SK-N-SH (cell line): ENCODE measurements at regions of chr17 and their contacts with region 1.

Region 1: DNA sequence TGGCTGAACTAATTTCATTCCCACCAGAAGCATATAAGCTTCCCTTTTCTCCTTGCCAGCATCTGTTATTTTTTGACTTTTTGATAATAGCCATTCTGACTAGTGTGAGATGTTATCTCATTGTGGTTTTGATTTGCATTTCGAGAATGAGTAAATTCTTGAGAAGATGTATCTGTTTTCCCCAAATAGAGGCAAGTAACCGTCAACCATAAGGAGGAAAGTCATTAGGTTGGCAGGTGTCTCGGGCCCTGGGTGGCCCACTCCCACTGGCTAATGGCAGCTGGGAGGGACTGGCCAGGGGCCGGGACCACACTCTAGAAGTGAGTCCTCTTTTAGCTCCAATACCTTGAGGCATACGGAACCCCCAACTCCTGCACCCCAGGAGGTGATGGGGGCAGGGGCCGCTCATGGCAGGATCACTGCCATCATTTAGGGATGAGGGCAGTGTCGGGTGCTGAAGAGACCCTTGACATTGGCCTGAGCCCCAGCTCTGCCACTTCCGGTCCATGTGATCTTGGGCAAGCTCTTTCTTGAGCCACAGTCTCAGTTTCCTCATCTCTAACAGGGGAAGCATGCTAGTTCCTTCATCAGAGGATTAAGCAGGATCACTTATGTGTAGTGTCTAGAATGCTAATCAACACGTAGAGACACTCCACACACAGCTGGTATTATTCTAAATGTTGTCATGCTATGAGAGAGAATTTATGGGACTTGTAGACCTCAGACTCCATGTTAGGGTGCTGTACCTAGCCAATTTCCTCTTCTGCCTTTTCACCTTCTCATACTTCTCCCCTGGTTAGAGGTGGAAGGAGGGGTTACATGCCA is 44.3 kb downstream of the RGS9 start:
- DNase-seq: no peak
- H3K4me3 ChIP-seq: no peak overlapping the region
- H3K27ac ChIP-seq: peak overlapping the region; percentile 14 to 79; a peak in 2 of 4 replicates
- H3K4me1 ChIP-seq: peaks cover 34 to 54% of the 10 kb centered on the region in 2 experiments
- H3K27me3 ChIP-seq: no peaks in the 10 kb centered on the region
- CTCF ChIP-seq: no peak
- EP300 ChIP-seq: peak; percentile 78 to 97; a peak in 3 of 4 replicates
- RAD21 ChIP-seq: no peak

Region 2: GRCh38 chr17:65198653-65199382 is 17.4 kb after region 1 on chr17:
- CTCF ChIA-PET with region 1: interaction called, 34 read pairs
- POLR2A ChIA-PET with region 1: interaction called, 4 read pairs
- DNase-seq: peak; percentile 90
- H3K4me3 ChIP-seq: no peak overlapping the region
- H3K27ac ChIP-seq: 0 out of 4 replicates have a peak overlapping the region, but pooled peaks of 1 of the 2 experiments have one; percentile 4
- H3K4me1 ChIP-seq: peaks cover 0 to 4% of the 10 kb centered on the region in 2 experiments; a peak in 1 of 4 replicates
- H3K27me3 ChIP-seq: no peaks in the 10 kb centered on the region
- CTCF ChIP-seq: peak; percentile 96
- EP300 ChIP-seq: peak; percentile 52 to 92; a peak in 3 of 4 replicates
- RAD21 ChIP-seq: peak; percentile 99

Region 3: GRCh38 chr17:65556014-65556909 is 374.8 kb after region 1 on chr17:
- CTCF ChIA-PET with region 1: no interaction called
- POLR2A ChIA-PET with region 1: no interaction called
- DNase-seq: peak; percentile 81
- H3K4me3 ChIP-seq: peak overlapping the region in 1 of 2 experiments; percentile 24; a peak in 1 of 4 replicates
- H3K27ac ChIP-seq: no peak overlapping the region
- H3K4me1 ChIP-seq: peaks cover 13 to 24% of the 10 kb centered on the region in 2 experiments; a peak in 3 of 4 replicates
- H3K27me3 ChIP-seq: no peaks in the 10 kb centered on the region
- CTCF ChIP-seq: peak; percentile 95
- EP300 ChIP-seq: no peak
- RAD21 ChIP-seq: peak; percentile 74